Activated CD8-positive, alpha-beta T cell treated with anti-CD3 and anti-CD28 coated beads for 36 hours (primary cell): ENCODE measurements at regions of chr12 and their contacts with region 1.

Region 1: GRCh38 chr12:49553512-49554088 is 14.3 kb downstream of the MCRS1 start:
- DNase-seq: peak; percentile 26
- ATAC-seq: peak; percentile 64
- H3K4me3 Mint-ChIP-seq: no peak overlapping the region
- H3K27ac Mint-ChIP-seq: no peak overlapping the region
- H3K4me1 Mint-ChIP-seq: peaks cover 3% of the 10 kb centered on the region
- H3K27me3 Mint-ChIP-seq: no peaks in the 10 kb centered on the region
- CTCF ChIP-seq: peak; percentile 73

Region 2: DNA sequence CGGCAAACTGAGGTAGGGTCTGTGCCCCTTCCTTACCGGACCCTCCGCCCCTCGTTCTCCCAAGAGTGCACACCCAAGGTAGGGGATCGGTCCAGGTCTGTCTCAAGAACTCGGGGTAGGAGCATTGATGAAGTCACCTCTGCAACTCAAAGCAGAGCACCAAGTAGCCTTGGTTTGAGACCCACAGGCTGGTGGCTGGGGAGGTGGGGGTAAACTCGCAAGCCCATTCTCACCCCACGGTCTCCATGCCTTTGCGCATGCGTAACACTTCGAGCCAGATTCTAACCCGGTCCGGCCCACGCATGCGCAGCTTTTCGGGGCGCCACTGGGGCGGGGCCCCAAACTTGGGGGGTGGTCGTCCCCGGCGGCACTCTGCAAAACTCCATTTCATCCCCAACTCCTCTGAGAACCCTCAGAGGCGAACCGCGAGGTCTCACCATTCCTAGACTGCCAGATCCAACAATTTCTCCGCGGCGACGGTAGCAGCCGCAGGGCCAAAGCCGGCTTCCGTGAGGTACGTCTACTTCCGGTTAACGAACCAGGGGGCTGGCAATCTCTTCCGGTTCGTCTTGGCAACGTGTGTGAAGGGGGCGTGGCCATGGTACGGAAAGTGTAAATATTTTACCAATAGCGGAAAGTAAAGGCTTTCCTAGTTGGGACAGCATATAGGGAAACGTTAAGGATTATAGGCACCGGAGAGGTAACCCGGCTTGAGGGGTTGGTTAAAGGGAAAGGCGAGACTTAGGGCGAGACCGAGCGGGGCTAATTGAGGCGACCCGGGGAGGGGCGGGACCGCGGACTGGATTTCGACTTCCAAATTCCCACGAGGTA is 14.2 kb after region 1 on chr12 and contains the start of gene MCRS1:
- CTCF ChIA-PET with region 1: interaction called, 11 read pairs
- POLR2A ChIA-PET with region 1: interaction called, 10 read pairs
- intact Hi-C with region 1: no loop called
- DNase-seq: peak; percentile 93
- ATAC-seq: peak; percentile 92
- H3K4me3 Mint-ChIP-seq: peak within 1 kb of the TSS; percentile 100
- H3K27ac Mint-ChIP-seq: peak within 1 kb of the TSS; percentile 96
- H3K4me1 Mint-ChIP-seq: peaks cover 50% of the 10 kb centered on the region
- H3K27me3 Mint-ChIP-seq: no peaks in the 10 kb centered on the region
- CTCF ChIP-seq: no peak
- total RNA-seq, gene MCRS1: 57.1 to 61.1 TPM